PC-9 (cell line): ENCODE measurements at regions of chr2 and their contacts with region 1.

Region 1: GRCh38 chr2:130391058-130391871 is 35.4 kb downstream of the PTPN18 start:
- DNase-seq: peak; percentile 59 to 70
- H3K4me3 ChIP-seq: peak overlapping the region; percentile 85
- H3K27ac ChIP-seq: no peak overlapping the region
- H3K4me1 ChIP-seq: peaks cover 15% of the 10 kb centered on the region; the same call in 1 of the 2 replicates
- H3K27me3 ChIP-seq: no peaks in the 10 kb centered on the region; the same call in 1 of the 2 replicates
- CTCF ChIP-seq: no peak

Region 2: GRCh38 chr2:130355578-130356431 is 35.5 kb before region 1 on chr2 and contains the start of gene PTPN18:
- CTCF ChIA-PET with region 1: no interaction called
- POLR2A ChIA-PET with region 1: no interaction called
- intact Hi-C with region 1: loop called (anchors 5 kb)
- DNase-seq: peak; percentile 75 to 87
- H3K4me3 ChIP-seq: peak within 1 kb of the TSS; percentile 88
- H3K27ac ChIP-seq: no peak within 1 kb of the TSS
- H3K4me1 ChIP-seq: peaks cover 16% of the 10 kb centered on the region
- H3K27me3 ChIP-seq: no peaks in the 10 kb centered on the region
- CTCF ChIP-seq: peak; percentile 42; the same call in 1 of the 2 replicates
- total RNA-seq, gene PTPN18: 54.5 and 55.9 TPM in 2 replicates

Region 3: DNA sequence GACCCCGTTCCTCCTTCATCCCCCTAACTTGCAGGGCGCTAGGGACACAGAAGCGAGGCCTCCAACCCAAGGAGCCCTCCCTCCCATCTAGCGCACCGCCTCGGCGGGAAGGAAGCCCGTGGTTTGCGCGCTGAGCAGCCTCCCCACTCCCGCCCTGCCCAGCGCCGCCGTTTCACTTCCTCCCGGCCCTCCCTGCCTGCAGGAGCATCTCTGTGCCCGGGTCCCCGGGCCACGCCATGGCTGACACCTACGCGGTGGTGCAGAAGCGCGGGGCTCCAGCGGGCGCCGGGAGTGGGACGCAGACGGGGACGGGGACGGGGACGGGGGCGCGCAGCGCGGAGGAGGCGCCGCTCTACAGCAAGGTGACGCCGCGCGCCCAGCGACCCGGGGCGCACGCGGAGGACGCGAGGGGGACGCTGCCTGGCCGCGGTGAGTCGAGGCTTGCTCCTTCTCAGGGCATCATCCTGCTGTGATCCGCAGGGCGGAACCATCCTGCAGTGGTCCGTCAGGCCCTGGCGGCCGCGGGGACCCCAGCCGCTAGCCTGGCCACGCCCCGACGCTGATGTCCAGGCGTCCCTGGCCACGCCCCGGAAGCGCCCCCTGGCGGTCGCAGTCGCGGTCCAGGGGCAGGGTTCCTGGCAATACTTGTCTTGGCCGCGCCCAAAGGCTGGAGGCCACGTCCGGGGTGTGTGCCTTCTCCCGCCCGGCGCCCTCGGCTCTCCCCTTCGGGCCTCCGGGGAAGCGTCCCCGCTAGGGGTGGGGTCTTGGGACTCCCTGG is 19.0 kb before region 1 on chr2:
- CTCF ChIA-PET with region 1: no interaction called
- POLR2A ChIA-PET with region 1: interaction called, 4 read pairs
- intact Hi-C with region 1: loop called (anchors 1 kb)
- DNase-seq: peak; percentile 70 to 93
- H3K4me3 ChIP-seq: peak overlapping the region; percentile 94
- H3K27ac ChIP-seq: no peak overlapping the region
- H3K4me1 ChIP-seq: 0 out of 2 replicates have a peak, but pooled peaks cover 9% of the 10 kb centered on the region
- H3K27me3 ChIP-seq: no peaks in the 10 kb centered on the region
- CTCF ChIP-seq: peak; percentile 91